Transverse colon (tissue), 4 donors: ENCODE measurements at regions of chr2 and their contacts with region 1.

Region 1: DNA sequence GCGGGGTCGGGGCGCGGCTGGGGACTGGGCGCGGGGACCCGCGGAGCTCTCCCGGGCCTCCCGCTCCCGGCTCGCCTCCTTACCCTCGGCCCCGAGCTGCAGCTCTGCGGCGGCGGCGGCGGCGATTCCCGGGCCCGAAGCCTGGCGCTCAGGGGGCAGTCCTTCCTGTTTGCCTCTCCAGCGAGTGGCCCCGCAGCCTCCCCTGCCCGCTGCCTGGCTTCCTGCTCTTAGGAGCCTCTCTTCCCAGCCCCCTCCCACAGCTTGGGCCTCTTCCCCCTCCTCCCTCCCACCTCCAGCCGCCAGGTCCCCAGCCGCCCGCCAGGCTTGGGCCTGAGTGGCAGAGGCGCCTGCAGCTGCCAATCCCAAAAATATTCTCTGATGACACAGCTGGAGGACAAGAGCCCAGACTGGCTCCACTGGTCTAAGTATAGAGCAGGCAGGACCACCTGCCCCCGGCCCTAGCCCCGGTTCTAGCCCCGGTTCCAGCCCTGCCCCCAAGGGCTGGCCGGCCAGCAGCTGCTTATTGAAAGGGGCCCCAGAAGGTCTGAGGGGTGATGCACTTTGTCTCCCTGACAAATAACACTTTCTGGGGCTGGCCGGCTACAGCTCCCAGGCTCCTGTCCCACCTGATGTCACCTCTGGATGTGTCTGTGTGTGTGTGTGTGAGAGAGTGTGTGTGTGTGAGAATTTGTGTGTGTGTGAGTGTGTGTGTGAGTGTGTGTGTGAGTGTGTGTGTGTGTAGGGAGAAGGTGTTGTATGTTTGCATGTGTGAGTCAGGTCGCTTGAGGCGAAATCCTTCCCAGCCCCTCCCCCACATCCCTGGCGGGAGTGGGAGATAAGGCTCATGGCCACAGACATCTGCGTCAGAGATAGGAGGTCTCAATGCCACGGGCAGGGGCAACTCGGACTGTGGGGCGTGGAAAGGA is at the start of gene OBSL1:
- DNase-seq: peak; percentile 41
- H3K4me3 ChIP-seq: peak within 1 kb of the TSS; percentile 53 to 74 (median 57)
- H3K27ac ChIP-seq: peak within 1 kb of the TSS; percentile 65 to 90 (median 81)
- H3K4me1 ChIP-seq: peaks cover 3 to 17% (median 8%) of the 10 kb centered on the region in 4 donors
- H3K27me3 ChIP-seq: peaks cover 30% of the 10 kb centered on the region
- CTCF ChIP-seq: no peak
- EP300 ChIP-seq: no peak
- POLR2A ChIP-seq: no peak
- total RNA-seq, gene OBSL1: 18.1 to 57.2 (median 19.0) TPM

Region 2: GRCh38 chr2:219597552-219598307 is 26.2 kb after region 1 on chr2 and contains the start of gene STK11IP:
- in situ Hi-C with region 1: no loop called
- intact Hi-C with region 1: loop called (anchors 2 kb)
- DNase-seq: peak; percentile 97
- H3K4me3 ChIP-seq: peak within 1 kb of the TSS; percentile 48 to 97 (median 64)
- H3K27ac ChIP-seq: peak within 1 kb of the TSS; percentile 92 to 95 (median 93)
- H3K4me1 ChIP-seq: peaks cover 5 to 15% (median 8%) of the 10 kb centered on the region in 4 donors
- H3K27me3 ChIP-seq: no peaks in the 10 kb centered on the region
- CTCF ChIP-seq: no peak
- EP300 ChIP-seq: no peak
- POLR2A ChIP-seq: peak; percentile 95
- total RNA-seq, gene STK11IP: 16.2 to 117 (median 38.2) TPM